ENCODE measurements at regions of chr1 and their contacts with region 1.

Region 1: DNA sequence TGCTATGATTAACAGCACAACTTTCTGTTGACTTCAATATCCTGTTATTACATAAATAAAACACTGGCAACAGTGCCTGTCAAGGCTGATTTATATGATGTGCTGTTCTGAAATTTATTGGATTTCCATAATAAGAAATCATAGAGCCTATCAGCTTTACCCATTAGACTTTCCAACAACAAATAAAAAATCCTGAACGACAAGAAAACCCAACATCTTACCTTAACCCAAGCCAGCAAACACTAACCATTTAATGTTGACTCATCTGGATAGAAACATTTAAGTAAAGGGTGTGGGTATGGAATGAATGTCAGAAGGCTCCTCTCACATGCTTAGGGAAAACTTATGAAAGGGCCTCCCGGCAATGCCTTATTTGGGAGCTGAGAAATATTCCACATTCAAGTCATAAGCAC is 165.1 kb downstream of the SLC45A1 start:
- DNase-seq: no peak
- H3K4me3 ChIP-seq: no peak overlapping the region
- H3K4me3 Mint-ChIP-seq: no peak overlapping the region
- H3K27ac ChIP-seq: no peak overlapping the region
- H3K27ac Mint-ChIP-seq: no peak overlapping the region
- H3K4me1 ChIP-seq: no peaks in the 10 kb centered on the region
- H3K4me1 Mint-ChIP-seq: peaks cover 2 to 4% (median 2%) of the 10 kb centered on the region in 3 donors
- H3K27me3 ChIP-seq: no peaks in the 10 kb centered on the region
- H3K27me3 Mint-ChIP-seq: no peaks in the 10 kb centered on the region

Region 2: GRCh38 chr1:8497210-8497801 is 14.3 kb after region 1 on chr1:
- CTCF ChIA-PET with region 1: no interaction called
- POLR2A ChIA-PET with region 1: interaction called, 10 read pairs
- DNase-seq: no peak
- H3K4me3 ChIP-seq: no peak overlapping the region
- H3K4me3 Mint-ChIP-seq: peak overlapping the region in 1 of 7 donors; percentile 4
- H3K27ac ChIP-seq: peak overlapping the region; percentile 51
- H3K27ac Mint-ChIP-seq: peak overlapping the region in 6 of 8 donors; percentile 12 to 98 (median 85)
- H3K4me1 ChIP-seq: no peaks in the 10 kb centered on the region
- H3K4me1 Mint-ChIP-seq: peaks cover 17 to 30% (median 22%) of the 10 kb centered on the region in 3 donors
- H3K27me3 ChIP-seq: no peaks in the 10 kb centered on the region
- H3K27me3 Mint-ChIP-seq: no peaks in the 10 kb centered on the region